ENCODE measurements at regions of chr17 and their contacts with region 1.

Region 1: DNA sequence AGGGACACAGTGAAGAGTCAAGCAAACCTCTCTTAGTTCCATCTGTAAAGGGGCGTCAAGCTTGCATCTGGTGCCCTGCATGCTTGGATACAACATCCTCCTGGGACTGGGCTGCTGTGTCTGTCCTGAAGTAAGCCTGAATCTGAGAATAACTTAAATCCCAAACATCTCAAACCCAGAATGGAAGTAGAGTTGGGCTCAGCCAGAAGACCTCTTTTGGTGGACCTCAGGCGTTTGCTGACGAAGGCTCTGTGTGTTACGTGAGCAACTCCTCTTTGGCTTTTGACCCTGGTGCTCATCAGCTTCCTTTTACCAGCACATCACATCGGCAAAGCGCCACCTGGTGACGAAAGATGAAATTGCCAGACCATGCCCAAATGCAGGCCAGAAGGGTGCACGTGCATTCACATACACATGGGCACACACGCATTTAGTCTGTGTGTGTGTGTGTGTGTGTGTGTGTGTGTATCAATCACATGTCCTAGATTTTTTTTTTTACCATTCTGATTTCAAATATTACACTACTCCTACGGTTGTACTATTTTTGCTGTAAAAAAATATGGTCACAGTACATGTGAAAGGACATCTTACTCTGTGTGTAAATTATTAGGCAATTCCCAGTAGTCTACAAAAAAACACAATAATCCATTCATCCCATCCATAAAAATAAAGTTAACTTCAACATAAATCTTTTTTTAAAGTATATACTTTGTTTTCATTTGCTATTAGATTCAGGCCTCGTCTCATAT is 41.1 kb upstream of the FOXJ1 start:
- DNase-seq: peak; percentile 89 to 97 (median 95)
- ATAC-seq: peak; percentile 73
- H3K4me3 ChIP-seq: no peak overlapping the region
- H3K4me3 Mint-ChIP-seq: peak overlapping the region; percentile 75
- H3K27ac ChIP-seq: no peak overlapping the region
- H3K27ac Mint-ChIP-seq: peak overlapping the region; percentile 92
- H3K4me1 ChIP-seq: peaks cover 72% of the 10 kb centered on the region
- H3K4me1 Mint-ChIP-seq: peaks cover 60% of the 10 kb centered on the region
- H3K27me3 ChIP-seq: no peaks in the 10 kb centered on the region
- H3K27me3 Mint-ChIP-seq: no peaks in the 10 kb centered on the region
- CTCF ChIP-seq: peak; percentile 86

Region 2: DNA sequence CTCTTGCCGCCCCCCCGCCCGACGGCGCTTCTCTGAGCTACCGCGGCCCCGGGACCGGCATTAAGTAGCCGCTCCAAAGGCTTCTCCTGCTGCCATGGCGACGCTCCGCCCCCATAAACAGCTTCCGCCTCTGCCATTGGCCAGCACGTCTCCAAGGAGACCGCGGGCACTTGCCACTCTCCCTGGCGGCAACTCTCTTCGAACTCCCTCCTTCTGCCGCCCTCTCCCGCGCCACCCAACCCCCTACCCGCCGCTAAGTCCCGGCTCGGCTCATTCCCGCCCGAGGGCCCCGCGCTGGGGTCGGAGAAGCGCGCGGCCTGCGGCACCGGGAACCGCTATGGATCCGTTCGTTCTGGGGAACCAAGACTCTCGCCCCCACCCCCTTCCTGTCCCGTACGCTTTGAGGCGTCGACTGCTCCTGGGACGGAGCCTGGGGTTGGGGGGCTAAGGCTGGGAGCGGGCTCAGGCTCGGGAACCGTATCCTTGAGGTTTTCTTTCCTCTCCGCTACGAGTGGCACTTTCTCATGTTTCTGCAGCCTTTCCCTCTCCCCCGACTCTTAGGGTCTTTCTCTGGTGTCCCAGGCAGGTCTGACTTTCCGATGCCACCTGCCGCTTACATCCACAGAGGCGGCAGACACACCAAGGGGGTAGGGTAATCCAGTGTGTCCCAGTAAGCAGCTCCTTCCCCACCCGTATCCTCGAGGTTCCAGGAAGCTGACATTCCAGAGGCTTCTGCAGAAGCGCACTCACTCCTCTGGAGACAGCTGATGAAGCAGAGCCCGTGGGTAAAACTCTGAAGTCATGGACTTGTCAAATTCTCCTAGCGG is 40.8 kb before region 1 on chr17 and contains the start of gene FOXJ1:
- CTCF ChIA-PET with region 1: interaction called, 17 read pairs
- POLR2A ChIA-PET with region 1: interaction called, 43 read pairs
- intact Hi-C with region 1: loop called (anchors 1 to 2 kb)
- DNase-seq: peak; percentile 83 to 97 (median 92)
- ATAC-seq: peak; percentile 64
- H3K4me3 ChIP-seq: peak within 1 kb of the TSS; percentile 51
- H3K4me3 Mint-ChIP-seq: peak within 1 kb of the TSS; percentile 87
- H3K27ac ChIP-seq: no peak within 1 kb of the TSS
- H3K27ac Mint-ChIP-seq: peak within 1 kb of the TSS; percentile 97
- H3K4me1 ChIP-seq: peaks cover 68% of the 10 kb centered on the region
- H3K4me1 Mint-ChIP-seq: peaks cover 60% of the 10 kb centered on the region
- H3K27me3 ChIP-seq: peaks cover 8 to 11% of the 10 kb centered on the region in 2 experiments
- H3K27me3 Mint-ChIP-seq: peaks cover 10% of the 10 kb centered on the region
- CTCF ChIP-seq: no peak
- total RNA-seq, gene FOXJ1: 0.63 to 0.89 TPM

Region 3: GRCh38 chr17:76153640-76154039 is 28.6 kb before region 1 on chr17:
- CTCF ChIA-PET with region 1: interaction called, 8 read pairs
- POLR2A ChIA-PET with region 1: interaction called, 58 read pairs
- intact Hi-C with region 1: no loop called
- DNase-seq: no peak
- ATAC-seq: no peak
- H3K4me3 ChIP-seq: no peak overlapping the region
- H3K4me3 Mint-ChIP-seq: peak overlapping the region; percentile 30
- H3K27ac ChIP-seq: peak overlapping the region; percentile 24 to 72
- H3K27ac Mint-ChIP-seq: peak overlapping the region; percentile 99
- H3K4me1 ChIP-seq: peaks cover 35% of the 10 kb centered on the region
- H3K4me1 Mint-ChIP-seq: peaks cover 50% of the 10 kb centered on the region
- H3K27me3 ChIP-seq: no peaks in the 10 kb centered on the region
- H3K27me3 Mint-ChIP-seq: no peaks in the 10 kb centered on the region
- CTCF ChIP-seq: no peak

Region 4: DNA sequence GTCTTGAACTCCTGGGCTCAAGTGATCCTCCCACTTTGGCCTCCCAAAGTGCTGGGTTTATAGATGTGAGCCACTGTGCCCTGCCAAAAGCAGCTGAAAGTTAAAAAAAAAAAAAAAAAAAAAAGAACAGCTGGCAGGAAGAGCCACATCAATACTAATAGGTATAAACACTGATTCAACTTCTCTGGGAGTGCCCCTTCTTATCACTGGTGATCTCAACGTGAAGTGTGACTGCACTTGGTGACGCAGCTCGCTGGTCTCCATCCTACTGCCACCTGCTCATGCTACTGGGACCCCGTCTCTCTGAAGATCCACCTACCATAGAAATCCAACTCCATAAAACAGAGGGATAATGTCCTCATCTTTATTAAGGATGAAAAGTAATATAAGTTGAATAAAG is 17.3 kb after region 1 on chr17:
- CTCF ChIA-PET with region 1: interaction called, 11 read pairs
- POLR2A ChIA-PET with region 1: interaction called, 18 read pairs
- intact Hi-C with region 1: no loop called
- DNase-seq: peak; percentile 39 to 93 (median 64)
- ATAC-seq: peak; percentile 98
- H3K4me3 ChIP-seq: no peak overlapping the region
- H3K4me3 Mint-ChIP-seq: peak overlapping the region; percentile 81
- H3K27ac ChIP-seq: peak overlapping the region in 1 of 2 donors; percentile 58
- H3K27ac Mint-ChIP-seq: peak overlapping the region; percentile 93
- H3K4me1 ChIP-seq: peaks cover 67% of the 10 kb centered on the region
- H3K4me1 Mint-ChIP-seq: peaks cover 71% of the 10 kb centered on the region
- H3K27me3 ChIP-seq: no peaks in the 10 kb centered on the region
- H3K27me3 Mint-ChIP-seq: no peaks in the 10 kb centered on the region
- CTCF ChIP-seq: no peak

Region 5: GRCh38 chr17:76246080-76247066 is 64.2 kb after region 1 on chr17:
- CTCF ChIA-PET with region 1: interaction called, 11 read pairs
- POLR2A ChIA-PET with region 1: interaction called, 15 read pairs
- intact Hi-C with region 1: no loop called
- DNase-seq: peak in 9 of 14 experiments; percentile 19 to 75 (median 44)
- ATAC-seq: peak; percentile 89
- H3K4me3 ChIP-seq: no peak overlapping the region
- H3K4me3 Mint-ChIP-seq: peak overlapping the region; percentile 81
- H3K27ac ChIP-seq: peak overlapping the region; percentile 33 to 62
- H3K27ac Mint-ChIP-seq: peak overlapping the region; percentile 86
- H3K4me1 ChIP-seq: peaks cover 69% of the 10 kb centered on the region
- H3K4me1 Mint-ChIP-seq: peaks cover 56% of the 10 kb centered on the region
- H3K27me3 ChIP-seq: no peaks in the 10 kb centered on the region
- H3K27me3 Mint-ChIP-seq: no peaks in the 10 kb centered on the region
- CTCF ChIP-seq: no peak

Region 6: GRCh38 chr17:76643553-76644148 is 461.5 kb after region 1 on chr17 and contains the start of gene ST6GALNAC1:
- CTCF ChIA-PET with region 1: no interaction called
- POLR2A ChIA-PET with region 1: no interaction called
- intact Hi-C with region 1: no loop called
- DNase-seq: peak in 13 of 14 experiments; percentile 14 to 73 (median 47)
- ATAC-seq: peak; percentile 95
- H3K4me3 ChIP-seq: peak within 1 kb of the TSS; percentile 43
- H3K4me3 Mint-ChIP-seq: peak within 1 kb of the TSS; percentile 65
- H3K27ac ChIP-seq: peak within 1 kb of the TSS in 1 of 2 donors; percentile 18
- H3K27ac Mint-ChIP-seq: peak within 1 kb of the TSS; percentile 33
- H3K4me1 ChIP-seq: peaks cover 39% of the 10 kb centered on the region
- H3K4me1 Mint-ChIP-seq: peaks cover 20% of the 10 kb centered on the region
- H3K27me3 ChIP-seq: no peaks in the 10 kb centered on the region
- H3K27me3 Mint-ChIP-seq: no peaks in the 10 kb centered on the region
- CTCF ChIP-seq: no peak
- total RNA-seq, gene ST6GALNAC1: 1.8 to 2.5 TPM